Dorsolateral prefrontal cortex (tissue), 120 donors: ENCODE measurements at regions of chr14 and their contacts with region 1.

Region 1: GRCh38 chr14:81453166-81453766 is 53.1 kb upstream of the STON2 start:
- DNase-seq: peak in 7 of 10 donors; percentile 31 to 72 (median 57)
- H3K4me3 ChIP-seq: peak overlapping the region in 23 of 59 donors; percentile 2 to 58 (median 27)
- H3K27ac ChIP-seq: no peak overlapping the region
- H3K27me3 ChIP-seq: peaks cover 0 to 16% (median 0%) of the 10 kb centered on the region in 45 donors
- CTCF ChIP-seq: peak; percentile 72 to 94 (median 88)

Region 2: DNA sequence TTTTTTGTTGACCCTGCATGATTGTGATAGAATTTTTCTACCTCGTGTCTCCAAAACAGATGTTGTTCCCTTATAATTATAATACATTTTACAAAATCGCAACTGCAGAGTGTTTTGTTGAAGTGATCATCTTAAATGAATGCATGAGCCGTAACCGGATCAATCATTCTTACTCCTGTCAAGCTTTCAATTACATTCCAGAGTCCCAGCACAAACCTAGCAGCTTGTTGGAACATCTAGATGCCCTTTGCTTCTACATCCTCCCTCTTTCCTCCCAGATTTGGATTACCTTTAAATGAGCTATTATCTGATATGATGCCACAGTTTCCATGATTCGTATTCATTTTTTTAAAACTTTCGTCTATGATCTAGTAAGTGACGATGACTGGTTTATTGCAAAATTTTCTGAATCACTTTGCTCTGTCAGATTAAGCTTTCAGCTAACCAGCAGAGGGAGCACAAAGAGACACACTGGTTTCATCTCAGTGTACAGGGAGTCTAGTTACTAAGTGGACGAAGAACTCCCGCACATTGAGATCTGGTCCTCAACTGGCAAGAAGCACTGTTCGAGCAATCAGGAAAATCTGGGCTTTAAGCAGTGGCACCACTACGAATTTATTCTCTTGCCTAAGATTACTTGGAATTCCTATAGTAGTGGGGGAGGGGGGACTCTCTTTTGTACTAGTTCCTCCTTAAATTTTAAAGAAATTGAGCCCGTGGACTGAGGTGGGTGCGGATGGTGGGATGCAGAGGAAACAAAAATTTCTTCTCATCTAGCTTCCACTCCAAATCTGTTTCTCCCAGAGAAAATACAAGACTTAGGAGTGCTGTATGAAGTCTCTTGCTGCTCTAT is 457.0 kb before region 1 on chr14:
- intact Hi-C with region 1: loop called in 1 of 2 experiments (anchors 10 kb)
- DNase-seq: peak in 3 of 10 donors; percentile 7 to 28 (median 9)
- H3K4me3 ChIP-seq: peak overlapping the region in 21 of 59 donors; percentile 3 to 48 (median 24)
- H3K27ac ChIP-seq: no peak overlapping the region
- H3K27me3 ChIP-seq: peaks cover 0 to 12% (median 0%) of the 10 kb centered on the region in 45 donors
- CTCF ChIP-seq: peak; percentile 48 to 83 (median 69)

Region 3: GRCh38 chr14:81269100-81269978 is 183.9 kb before region 1 on chr14:
- intact Hi-C with region 1: loop called (anchors 1 to 5 kb)
- DNase-seq: peak in 1 of 10 donors; percentile 7
- H3K4me3 ChIP-seq: no peak overlapping the region
- H3K27ac ChIP-seq: peak overlapping the region in 3 of 59 donors; percentile 16 to 17 (median 16)
- H3K27me3 ChIP-seq: peaks cover 0 to 16% (median 0%) of the 10 kb centered on the region in 45 donors
- CTCF ChIP-seq: peak; percentile 68 to 97 (median 86)